Dorsolateral prefrontal cortex (tissue), 120 donors: ENCODE measurements at regions of chr9 and their contacts with region 1.

Region 1: DNA sequence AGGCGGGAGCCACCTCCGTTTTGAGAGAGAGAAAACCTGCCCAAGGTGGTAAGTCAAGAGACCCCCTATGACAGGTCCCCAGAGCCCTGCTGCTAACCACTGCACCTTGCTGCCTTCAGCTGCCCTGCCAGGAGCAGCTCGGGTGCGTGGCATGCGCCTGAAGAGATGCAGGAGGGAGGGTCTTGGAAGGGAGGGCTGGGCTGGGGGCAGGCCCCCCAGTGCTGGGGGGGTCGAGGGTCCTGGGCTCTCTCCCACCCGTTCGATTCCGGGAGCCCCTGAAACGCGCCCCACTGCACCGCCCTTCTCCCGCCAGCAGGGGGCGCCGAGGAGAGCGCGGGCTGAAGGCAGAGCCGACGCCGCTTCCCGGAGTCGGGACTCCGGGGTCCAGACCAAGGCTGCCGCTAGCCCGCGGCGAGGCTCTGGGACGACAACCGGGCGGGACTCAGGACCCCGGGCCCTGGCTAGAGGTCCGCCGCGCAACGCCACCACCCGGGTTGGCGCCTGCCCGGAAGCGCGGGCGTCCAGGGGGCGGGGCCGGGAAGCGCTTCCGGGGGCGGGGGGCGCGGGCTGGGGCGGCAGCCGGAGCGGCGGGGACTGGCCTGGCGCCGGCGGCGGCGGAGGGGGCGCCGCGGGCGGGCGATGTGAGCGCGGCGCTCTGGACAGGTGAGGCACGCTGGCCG is at the start of gene ZBTB34:
- DNase-seq: peak in 7 of 10 donors; percentile 44 to 81 (median 60)
- H3K4me3 ChIP-seq: peak within 1 kb of the TSS; percentile 64 to 99 (median 91)
- H3K27ac ChIP-seq: peak within 1 kb of the TSS; percentile 77 to 98 (median 94)
- H3K27me3 ChIP-seq: no peaks in the 10 kb centered on the region
- CTCF ChIP-seq: peak; percentile 95 to 100 (median 100)
- total RNA-seq, gene ZBTB34: 9.1 to 17.6 (median 13.2) TPM

Region 2: DNA sequence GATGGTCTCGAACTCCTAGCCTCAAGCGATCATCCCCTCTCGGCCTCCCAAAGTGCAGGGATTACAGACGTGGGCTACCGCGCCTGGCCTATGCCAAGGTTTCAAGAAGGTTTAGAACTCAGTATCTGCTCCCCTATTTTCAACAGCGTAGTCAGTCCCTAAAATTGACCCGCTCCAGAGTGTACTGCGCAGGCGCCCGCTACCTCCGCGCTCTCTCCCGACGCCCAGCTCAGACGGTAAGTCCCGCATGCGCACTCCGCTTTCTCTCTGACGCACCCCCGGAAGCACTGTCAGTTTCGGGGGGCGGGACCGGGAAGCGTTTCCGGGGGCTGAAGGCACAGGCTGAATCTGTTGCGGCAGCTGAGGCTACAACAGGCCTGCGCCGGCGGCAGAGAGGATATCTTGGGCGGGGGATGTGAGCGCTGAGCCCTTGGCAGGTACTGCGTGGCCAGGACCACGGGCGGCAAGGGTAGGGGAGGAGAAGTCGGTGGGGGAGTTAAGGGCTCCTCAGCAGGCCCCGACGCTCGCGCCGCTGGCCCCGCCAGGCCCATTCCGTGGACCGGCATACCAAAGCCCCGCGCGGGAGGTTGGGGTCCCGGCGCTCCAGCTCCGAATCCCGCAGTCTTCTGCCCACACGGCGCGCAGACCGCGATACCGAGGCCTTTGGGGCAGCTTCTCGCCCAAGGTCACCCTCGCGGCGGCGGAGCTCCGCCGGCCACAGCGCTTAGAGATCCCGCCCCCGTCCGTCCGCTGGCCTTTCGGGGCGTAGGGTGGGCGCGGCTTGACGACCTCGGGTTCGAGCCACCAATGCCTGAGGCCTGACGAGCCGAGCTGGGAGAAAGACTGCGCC is 55.3 kb before region 1 on chr9 and contains the start of gene ZBTB43:
- intact Hi-C with region 1: loop called in 1 of 2 experiments (anchors 1 kb)
- DNase-seq: peak; percentile 87 to 96 (median 94)
- H3K4me3 ChIP-seq: peak within 1 kb of the TSS; percentile 63 to 100 (median 96)
- H3K27ac ChIP-seq: peak within 1 kb of the TSS in 57 of 59 donors; percentile 24 to 93 (median 81)
- H3K27me3 ChIP-seq: no peaks in the 10 kb centered on the region
- CTCF ChIP-seq: peak in 38 of 56 donors; percentile 5 to 56 (median 26)
- total RNA-seq, gene ZBTB43: 18.2 to 56.1 (median 32.5) TPM

Region 3: DNA sequence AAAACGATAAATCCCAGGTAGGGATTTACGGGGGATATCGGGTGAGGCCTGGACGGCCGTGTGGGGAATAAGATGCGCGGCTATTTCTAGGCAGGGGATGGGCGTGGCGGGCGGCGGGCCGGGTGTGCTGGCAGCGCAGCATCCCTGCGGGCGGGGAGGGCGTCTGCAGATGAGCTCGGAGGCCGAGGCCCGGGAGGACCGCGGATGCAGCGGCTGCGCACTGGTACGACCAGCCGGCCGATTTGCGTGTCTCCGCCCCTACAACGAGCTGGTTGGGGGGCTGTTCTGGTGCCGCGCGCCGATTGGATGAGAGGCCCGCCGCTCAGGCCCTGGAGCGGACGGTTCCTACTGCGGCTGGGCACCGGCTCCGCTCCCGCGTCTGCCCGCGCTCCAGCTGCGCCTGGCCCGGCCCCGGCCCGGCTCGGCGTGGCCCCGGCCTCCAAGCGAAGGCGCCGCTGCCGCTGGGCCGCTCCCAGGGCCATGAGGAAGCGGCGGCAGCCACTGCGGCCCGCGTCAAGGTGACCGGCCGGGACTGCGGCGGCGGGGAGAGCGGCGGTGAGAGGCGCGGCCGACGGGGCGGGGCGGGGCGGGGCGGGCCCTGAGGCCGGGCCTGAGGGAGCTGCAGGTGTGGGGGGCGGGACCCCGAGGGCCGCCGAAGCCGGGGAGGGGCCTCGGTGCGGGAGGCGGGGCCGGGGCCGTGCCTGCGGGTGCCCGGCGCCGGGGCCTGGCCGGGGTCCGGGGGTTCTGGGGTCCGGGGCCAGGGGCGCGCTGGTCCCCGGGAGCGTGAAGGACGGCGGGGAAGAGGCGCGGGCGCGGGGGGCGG is 54.5 kb after region 1 on chr9 and contains the start of gene RALGPS1:
- intact Hi-C with region 1: loop called (anchors 5 to 10 kb)
- DNase-seq: peak; percentile 95 to 98 (median 97)
- H3K4me3 ChIP-seq: peak within 1 kb of the TSS; percentile 50 to 81 (median 67)
- H3K27ac ChIP-seq: peak within 1 kb of the TSS in 56 of 59 donors; percentile 21 to 95 (median 86)
- H3K27me3 ChIP-seq: no peaks in the 10 kb centered on the region
- CTCF ChIP-seq: peak in 33 of 56 donors; percentile 9 to 53 (median 31)
- total RNA-seq, gene RALGPS1: 49.6 to 99.1 (median 71.8) TPM